Panc1 (cell line): ENCODE measurements at regions of chr7 and their contacts with region 1.

Region 1: DNA sequence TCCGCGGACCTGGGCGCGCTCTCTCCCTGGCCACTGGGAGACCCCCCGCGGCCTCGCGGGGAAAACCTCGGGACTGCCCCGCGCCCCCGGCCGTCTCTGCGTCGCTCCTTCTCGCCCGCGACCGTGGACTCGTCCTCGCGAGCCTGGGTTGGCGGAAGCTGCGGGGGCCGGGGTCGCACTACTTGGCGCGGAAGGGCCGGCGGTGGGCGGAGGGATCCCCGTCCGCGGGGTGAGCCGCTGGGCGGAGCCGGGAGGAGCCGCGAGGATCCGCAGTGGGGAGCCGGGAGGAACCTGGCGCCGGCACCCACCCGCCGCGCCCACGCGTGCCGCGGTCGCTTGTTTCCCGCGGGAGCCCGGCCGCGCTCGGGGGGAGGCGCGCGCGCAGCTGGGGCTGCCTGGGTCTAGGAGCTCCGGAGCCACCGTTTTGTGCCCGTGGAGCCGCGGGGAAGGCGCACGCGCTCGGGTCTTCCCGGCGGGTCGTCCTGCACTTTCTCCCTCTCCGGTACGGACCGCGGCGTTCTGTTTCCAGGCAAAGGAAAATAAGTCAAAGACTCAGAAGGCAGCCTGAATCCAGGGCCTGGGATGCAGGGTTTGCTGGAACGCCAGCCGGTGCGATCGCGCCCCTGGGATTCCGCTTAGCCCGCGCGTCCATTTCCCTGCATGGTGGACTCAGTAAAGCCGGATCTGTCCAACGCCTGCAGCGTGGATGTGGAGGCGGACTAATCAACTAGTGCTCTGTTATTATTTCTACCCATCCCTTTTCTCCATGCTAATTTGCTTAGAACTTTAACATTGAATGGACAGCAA is 28.7 kb upstream of the KMT2C start:
- DNase-seq: no peak
- ATAC-seq: peak; percentile 82
- H3K4me3 ChIP-seq: peak overlapping the region; percentile 90 to 95
- H3K27ac ChIP-seq: peak overlapping the region; percentile 93
- H3K4me1 ChIP-seq: peaks cover 7% of the 10 kb centered on the region; the same call in 1 of the 2 replicates
- H3K27me3 ChIP-seq: no peaks in the 10 kb centered on the region
- CTCF ChIP-seq: no peak

Region 2: GRCh38 chr7:152602962-152603361 is 138.4 kb after region 1 on chr7:
- CTCF ChIA-PET with region 1: no interaction called
- POLR2A ChIA-PET with region 1: interaction called, 11 read pairs
- in situ Hi-C with region 1: no loop called
- intact Hi-C with region 1: no loop called
- DNase-seq: no peak
- ATAC-seq: no peak
- H3K4me3 ChIP-seq: no peak overlapping the region
- H3K27ac ChIP-seq: no peak overlapping the region
- H3K4me1 ChIP-seq: no peaks in the 10 kb centered on the region
- H3K27me3 ChIP-seq: peaks cover 2% of the 10 kb centered on the region; the same call in 1 of the 2 replicates
- CTCF ChIP-seq: no peak